Left cardiac atrium (tissue), 4 donors: ENCODE measurements at regions of chr1 and their contacts with region 1.

Region 1: GRCh38 chr1:61049850-61050540 is 32.4 kb upstream of the NFIA start:
- DNase-seq: peak; percentile 93
- ATAC-seq: peak; percentile 80 to 83

Region 2: GRCh38 chr1:59971464-59971911 is 1078.5 kb before region 1 on chr1:
- intact Hi-C with region 1: loop called in 1 of 2 experiments (anchors 10 kb)
- DNase-seq: peak; percentile 71
- ATAC-seq: peak; percentile 84 to 89

Region 3: DNA sequence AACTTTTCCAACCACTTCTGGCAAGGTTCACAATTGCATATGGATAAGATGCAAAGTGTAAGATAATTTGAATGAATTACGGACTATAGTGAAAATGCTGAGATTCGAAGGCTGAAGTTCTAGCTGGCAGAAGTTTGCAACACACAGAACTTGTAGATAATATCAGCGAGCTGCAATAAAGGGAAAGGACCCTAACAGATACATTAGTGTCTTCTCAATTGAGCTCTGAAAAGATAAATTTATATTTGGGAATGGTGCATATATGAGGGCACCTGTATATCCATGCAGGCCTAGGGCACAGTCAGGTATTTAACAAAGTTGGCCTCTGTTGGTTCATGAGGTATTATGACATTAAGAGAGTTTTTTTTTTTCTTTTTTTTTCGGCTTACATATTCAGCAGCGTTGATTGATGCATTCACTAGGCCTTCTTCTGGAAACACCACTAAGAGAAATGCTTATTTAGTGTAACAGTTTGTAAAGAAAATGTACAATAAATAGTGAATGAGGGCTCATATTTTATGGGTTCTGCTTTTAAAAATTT is 34.6 kb after region 1 on chr1:
- intact Hi-C with region 1: loop called in 1 of 2 experiments (anchors 5 kb)
- DNase-seq: no peak
- ATAC-seq: no peak

Region 4: DNA sequence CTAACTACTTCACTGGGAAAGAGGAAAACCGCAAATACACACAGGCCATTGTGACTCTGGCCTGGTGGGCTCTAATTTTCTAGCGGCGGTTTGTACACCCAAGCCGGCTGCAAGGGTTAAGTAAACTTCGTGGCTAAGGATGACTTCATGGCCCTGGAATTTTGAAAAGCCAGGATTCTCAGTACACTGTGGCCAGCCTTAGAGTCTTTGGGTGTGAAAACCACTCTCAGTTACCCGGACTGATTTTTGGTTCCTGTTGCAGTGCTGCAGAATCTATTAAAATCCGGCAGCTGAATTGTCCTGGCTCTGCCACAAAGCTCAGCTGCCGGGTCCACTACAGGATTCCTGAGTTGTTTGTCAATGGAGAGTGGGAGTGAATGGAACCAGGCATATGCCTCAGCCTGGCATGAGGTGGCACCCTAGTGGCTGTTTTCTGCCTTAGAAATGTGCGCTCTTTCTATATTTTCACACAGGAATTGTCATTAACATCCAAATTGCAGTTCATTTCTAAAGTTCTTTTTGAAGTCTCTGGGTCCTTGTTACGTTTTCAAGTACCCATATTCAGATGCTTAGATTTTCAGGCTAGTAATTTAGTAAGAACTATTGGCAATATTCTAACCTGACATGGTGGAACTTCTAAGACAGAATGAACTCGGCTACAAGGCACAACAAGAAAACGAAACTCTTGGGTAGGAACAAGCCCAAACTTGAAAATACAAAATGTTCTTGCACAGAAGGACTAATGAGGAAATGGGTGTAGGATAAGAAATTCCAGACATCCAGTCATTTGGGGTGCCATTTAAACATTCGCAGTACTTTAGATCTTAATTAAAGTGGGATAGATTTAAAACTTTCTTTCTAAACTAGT is 288.2 kb after region 1 on chr1:
- intact Hi-C with region 1: loop called (anchors 2 to 5 kb)
- DNase-seq: peak; percentile 78
- ATAC-seq: peak; percentile 91 to 92

Region 5: DNA sequence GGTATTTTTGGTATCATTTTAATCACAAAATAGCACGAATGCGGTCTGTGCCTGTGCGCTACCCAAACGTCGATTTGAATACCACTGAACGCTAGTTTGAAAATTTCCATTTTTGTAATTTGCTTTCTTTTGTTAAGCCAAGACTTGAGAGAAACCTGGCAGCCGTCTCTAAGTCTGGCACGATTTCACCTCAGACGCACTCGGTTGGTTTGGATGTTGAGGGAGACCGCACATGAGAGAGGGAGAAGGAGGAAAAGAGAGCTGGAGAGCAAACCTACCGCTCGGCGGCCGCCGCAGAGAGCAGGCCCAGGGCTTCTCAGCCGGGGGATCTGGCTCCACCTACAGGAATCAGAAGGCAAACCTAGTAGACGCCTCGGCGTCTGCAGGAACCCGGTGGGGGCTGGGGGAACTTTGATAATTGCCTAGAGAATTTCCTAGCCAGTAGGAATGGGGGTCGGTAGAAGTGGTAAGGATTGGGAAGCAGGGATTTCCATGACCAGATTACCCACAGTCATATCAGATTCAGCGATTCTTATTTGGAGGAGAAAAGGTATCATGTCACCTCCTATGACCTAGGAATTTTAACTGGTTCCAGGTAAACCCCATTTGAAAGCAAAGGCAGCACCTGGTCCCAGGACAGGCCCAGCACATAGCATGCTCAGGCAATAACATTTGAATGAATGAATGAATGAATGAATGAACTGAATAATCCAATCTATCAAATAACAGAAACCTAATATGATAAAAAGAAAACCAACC is 591.8 kb after region 1 on chr1:
- intact Hi-C with region 1: loop called in 1 of 2 experiments (anchors 5 kb)
- DNase-seq: peak; percentile 86
- ATAC-seq: peak; percentile 91 to 92